CD8-positive, alpha-beta memory T cell (primary cell): ENCODE measurements at regions of chr9 and their contacts with region 1.

Region 1: GRCh38 chr9:97598461-97599288 is 34.5 kb downstream of the TSTD2 start:
- DNase-seq: peak; percentile 44 to 75 (median 61)
- H3K4me3 ChIP-seq: no peak overlapping the region
- H3K4me3 Mint-ChIP-seq: peak overlapping the region in 6 of 7 donors; percentile 49 to 79 (median 62)
- H3K27ac ChIP-seq: no peak overlapping the region
- H3K27ac Mint-ChIP-seq: peak overlapping the region in 6 of 8 donors; percentile 10 to 72 (median 38)
- H3K4me1 ChIP-seq: no peaks in the 10 kb centered on the region
- H3K4me1 Mint-ChIP-seq: peaks cover 7 to 9% (median 7%) of the 10 kb centered on the region in 3 donors
- H3K27me3 ChIP-seq: no peaks in the 10 kb centered on the region
- H3K27me3 Mint-ChIP-seq: no peaks in the 10 kb centered on the region

Region 2: GRCh38 chr9:96854073-96854876 is 744.4 kb before region 1 on chr9 and contains the start of gene ZNF782:
- CTCF ChIA-PET with region 1: interaction called, 23 read pairs
- POLR2A ChIA-PET with region 1: no interaction called
- DNase-seq: peak; percentile 77 to 90 (median 79)
- H3K4me3 ChIP-seq: peak within 1 kb of the TSS; percentile 78
- H3K4me3 Mint-ChIP-seq: peak within 1 kb of the TSS; percentile 93 to 100 (median 100)
- H3K27ac ChIP-seq: peak within 1 kb of the TSS; percentile 60
- H3K27ac Mint-ChIP-seq: peak within 1 kb of the TSS; percentile 72 to 100 (median 99)
- H3K4me1 ChIP-seq: peaks cover 33% of the 10 kb centered on the region
- H3K4me1 Mint-ChIP-seq: peaks cover 43 to 59% (median 55%) of the 10 kb centered on the region in 3 donors
- H3K27me3 ChIP-seq: no peaks in the 10 kb centered on the region
- H3K27me3 Mint-ChIP-seq: peaks cover 2 to 6% of the 10 kb centered on the region in 2 donors
- total RNA-seq, gene ZNF782: 4.2 to 6.5 TPM

Region 3: GRCh38 chr9:97386733-97387503 is 211.8 kb before region 1 on chr9:
- CTCF ChIA-PET with region 1: interaction called, 11 read pairs
- POLR2A ChIA-PET with region 1: no interaction called
- DNase-seq: peak; percentile 42 to 75 (median 59)
- H3K4me3 ChIP-seq: no peak overlapping the region
- H3K4me3 Mint-ChIP-seq: peak overlapping the region in 1 of 7 donors; percentile 61
- H3K27ac ChIP-seq: no peak overlapping the region
- H3K27ac Mint-ChIP-seq: peak overlapping the region in 1 of 8 donors; percentile 79
- H3K4me1 ChIP-seq: peaks cover 5% of the 10 kb centered on the region
- H3K4me1 Mint-ChIP-seq: peaks cover 4 to 10% (median 5%) of the 10 kb centered on the region in 3 donors
- H3K27me3 ChIP-seq: no peaks in the 10 kb centered on the region
- H3K27me3 Mint-ChIP-seq: peaks cover 10 to 12% of the 10 kb centered on the region in 2 donors

Region 4: GRCh38 chr9:97411789-97412625 is 186.7 kb before region 1 on chr9 and contains the start of gene TDRD7:
- CTCF ChIA-PET with region 1: interaction called, 50 read pairs
- POLR2A ChIA-PET with region 1: interaction called, 4 read pairs
- DNase-seq: peak; percentile 88 to 92 (median 90)
- H3K4me3 ChIP-seq: peak within 1 kb of the TSS; percentile 47
- H3K4me3 Mint-ChIP-seq: peak within 1 kb of the TSS; percentile 81 to 92 (median 86)
- H3K27ac ChIP-seq: peak within 1 kb of the TSS; percentile 52
- H3K27ac Mint-ChIP-seq: peak within 1 kb of the TSS; percentile 52 to 95 (median 90)
- H3K4me1 ChIP-seq: peaks cover 19% of the 10 kb centered on the region
- H3K4me1 Mint-ChIP-seq: peaks cover 31 to 43% (median 35%) of the 10 kb centered on the region in 3 donors
- H3K27me3 ChIP-seq: peaks cover 4% of the 10 kb centered on the region
- H3K27me3 Mint-ChIP-seq: peaks cover 8 to 16% of the 10 kb centered on the region in 2 donors
- total RNA-seq, gene TDRD7: 5.4 to 6.1 TPM

Region 5: GRCh38 chr9:97468658-97469448 is 129.8 kb before region 1 on chr9:
- CTCF ChIA-PET with region 1: interaction called, 33 read pairs
- POLR2A ChIA-PET with region 1: no interaction called
- DNase-seq: peak in 3 of 5 donors; percentile 1 to 46 (median 5)
- H3K4me3 ChIP-seq: no peak overlapping the region
- H3K4me3 Mint-ChIP-seq: no peak overlapping the region
- H3K27ac ChIP-seq: no peak overlapping the region
- H3K27ac Mint-ChIP-seq: peak overlapping the region in 4 of 8 donors; percentile 25 to 75 (median 42)
- H3K4me1 ChIP-seq: no peaks in the 10 kb centered on the region
- H3K4me1 Mint-ChIP-seq: no peaks in the 10 kb centered on the region
- H3K27me3 ChIP-seq: no peaks in the 10 kb centered on the region
- H3K27me3 Mint-ChIP-seq: no peaks in the 10 kb centered on the region

Region 6: DNA sequence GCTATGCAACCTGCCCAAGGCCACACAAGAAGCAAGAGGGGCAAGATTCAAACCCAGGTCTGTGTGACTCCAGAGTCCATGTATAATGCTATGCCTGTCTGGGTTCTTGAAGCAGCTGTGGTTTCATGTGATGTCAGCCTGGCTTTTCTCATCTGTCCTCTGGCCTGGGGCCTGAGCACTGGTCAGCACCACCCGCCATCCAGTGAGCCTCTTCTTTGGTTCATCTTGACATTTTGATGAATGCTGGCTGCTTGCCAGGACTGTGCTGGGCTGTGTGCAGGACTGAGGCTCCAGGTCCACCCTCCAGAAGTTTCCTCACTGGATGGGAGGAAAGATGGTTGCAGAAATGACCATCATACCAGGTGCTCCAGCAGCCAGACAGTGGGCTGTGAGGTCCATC is 27.0 kb before region 1 on chr9:
- CTCF ChIA-PET with region 1: interaction called, 17 read pairs
- POLR2A ChIA-PET with region 1: no interaction called
- DNase-seq: no peak
- H3K4me3 ChIP-seq: no peak overlapping the region
- H3K4me3 Mint-ChIP-seq: no peak overlapping the region
- H3K27ac ChIP-seq: no peak overlapping the region
- H3K27ac Mint-ChIP-seq: no peak overlapping the region
- H3K4me1 ChIP-seq: no peaks in the 10 kb centered on the region
- H3K4me1 Mint-ChIP-seq: peaks cover 14 to 21% (median 21%) of the 10 kb centered on the region in 3 donors
- H3K27me3 ChIP-seq: no peaks in the 10 kb centered on the region
- H3K27me3 Mint-ChIP-seq: peaks cover 0 to 6% of the 10 kb centered on the region in 2 donors

Region 7: DNA sequence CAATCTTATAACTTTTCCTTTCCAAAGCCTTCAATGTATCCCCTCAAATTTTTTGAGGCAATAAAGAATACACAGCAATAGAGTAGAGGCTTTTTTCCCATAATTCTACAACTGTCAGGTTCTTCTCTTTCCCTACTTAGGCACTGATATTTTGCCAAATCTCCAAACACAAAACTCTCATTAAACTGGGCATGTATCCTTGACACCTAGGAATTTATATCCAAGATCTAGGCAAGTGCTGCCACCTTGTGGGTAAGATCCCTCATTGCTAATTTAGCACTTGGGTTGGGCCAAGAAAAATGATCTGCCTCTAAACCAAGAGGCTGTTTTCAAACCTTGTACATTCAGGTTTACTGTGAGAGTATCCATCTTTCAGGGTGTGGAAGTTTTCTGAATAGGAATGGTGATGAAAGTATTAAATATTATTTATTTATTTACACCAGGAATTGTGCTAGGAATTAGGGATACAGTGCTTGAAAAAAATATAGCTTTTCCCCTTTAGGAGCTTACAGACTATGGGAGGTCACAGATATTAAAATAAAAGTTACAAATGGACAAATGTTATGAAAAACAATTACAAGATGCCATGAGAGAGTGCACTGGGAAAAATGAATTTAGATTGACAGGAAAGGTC is 16.9 kb after region 1 on chr9:
- CTCF ChIA-PET with region 1: interaction called, 48 read pairs
- POLR2A ChIA-PET with region 1: no interaction called
- DNase-seq: peak; percentile 32 to 58 (median 43)
- H3K4me3 ChIP-seq: no peak overlapping the region
- H3K4me3 Mint-ChIP-seq: no peak overlapping the region
- H3K27ac ChIP-seq: no peak overlapping the region
- H3K27ac Mint-ChIP-seq: peak overlapping the region in 1 of 8 donors; percentile 3
- H3K4me1 ChIP-seq: no peaks in the 10 kb centered on the region
- H3K4me1 Mint-ChIP-seq: no peaks in the 10 kb centered on the region
- H3K27me3 ChIP-seq: no peaks in the 10 kb centered on the region
- H3K27me3 Mint-ChIP-seq: no peaks in the 10 kb centered on the region